ENCODE measurements at regions of chr16 and their contacts with region 1.

Region 1: GRCh38 chr16:53207810-53208752 is 153.3 kb downstream of the CHD9 start:
- DNase-seq: peak; percentile 28 to 45
- ATAC-seq: peak; percentile 86 to 95
- H3K4me3 ChIP-seq: peak overlapping the region; percentile 32 to 56 (median 43)
- H3K27ac ChIP-seq: peak overlapping the region; percentile 70 to 90 (median 76)
- H3K4me1 ChIP-seq: peaks cover 68 to 72% of the 10 kb centered on the region in 2 donors
- H3K27me3 ChIP-seq: no peaks in the 10 kb centered on the region
- CTCF ChIP-seq: peak; percentile 22 to 58 (median 51)
- POLR2A ChIP-seq: no peak

Region 2: GRCh38 chr16:53099318-53100130 is 108.6 kb before region 1 on chr16:
- in situ Hi-C with region 1: no loop called
- intact Hi-C with region 1: loop called (anchors 1 kb)
- DNase-seq: peak; percentile 94 to 99
- ATAC-seq: peak; percentile 85 to 91
- H3K4me3 ChIP-seq: peak overlapping the region; percentile 51 to 60 (median 54)
- H3K27ac ChIP-seq: peak overlapping the region; percentile 94 to 96 (median 95)
- H3K4me1 ChIP-seq: peaks cover 45% of the 10 kb centered on the region in 2 donors
- H3K27me3 ChIP-seq: no peaks in the 10 kb centered on the region
- CTCF ChIP-seq: no peak
- POLR2A ChIP-seq: peak in 1 of 2 donors; percentile 39

Region 3: DNA sequence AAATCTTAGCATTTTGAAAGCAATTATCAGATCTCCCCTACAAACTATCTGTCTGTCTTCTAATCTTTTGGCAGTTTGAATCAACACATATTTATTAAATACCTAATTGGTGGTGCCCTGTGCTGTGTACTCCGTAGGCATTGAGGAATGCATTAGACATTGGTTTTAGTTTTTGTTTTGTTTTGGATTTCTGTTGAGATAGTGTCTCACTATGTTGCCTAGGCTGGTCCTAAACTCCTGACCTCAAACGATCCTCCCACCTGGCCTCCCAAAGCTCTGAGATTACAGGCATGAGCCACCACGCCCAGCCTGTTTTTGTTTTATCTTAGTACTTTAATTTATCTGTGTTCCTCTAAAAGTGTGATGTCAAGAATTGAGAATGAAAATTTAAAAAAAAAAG is 101.4 kb after region 1 on chr16:
- in situ Hi-C with region 1: no loop called
- intact Hi-C with region 1: no loop called
- DNase-seq: no peak
- ATAC-seq: no peak
- H3K4me3 ChIP-seq: no peak overlapping the region
- H3K27ac ChIP-seq: no peak overlapping the region
- H3K4me1 ChIP-seq: peaks cover 0 to 6% of the 10 kb centered on the region in 2 donors
- H3K27me3 ChIP-seq: no peaks in the 10 kb centered on the region
- CTCF ChIP-seq: no peak
- POLR2A ChIP-seq: no peak

Region 4: GRCh38 chr16:53482123-53482522 is 274.0 kb after region 1 on chr16:
- in situ Hi-C with region 1: no loop called
- intact Hi-C with region 1: no loop called
- DNase-seq: no peak
- ATAC-seq: no peak
- H3K4me3 ChIP-seq: no peak overlapping the region
- H3K27ac ChIP-seq: no peak overlapping the region
- H3K4me1 ChIP-seq: no peaks in the 10 kb centered on the region
- H3K27me3 ChIP-seq: no peaks in the 10 kb centered on the region
- CTCF ChIP-seq: no peak
- POLR2A ChIP-seq: no peak

Measured in gastrocnemius medialis (tissue), 4 donors.